ENCODE measurements at regions of chr18 and their contacts with region 1.

Region 1: DNA sequence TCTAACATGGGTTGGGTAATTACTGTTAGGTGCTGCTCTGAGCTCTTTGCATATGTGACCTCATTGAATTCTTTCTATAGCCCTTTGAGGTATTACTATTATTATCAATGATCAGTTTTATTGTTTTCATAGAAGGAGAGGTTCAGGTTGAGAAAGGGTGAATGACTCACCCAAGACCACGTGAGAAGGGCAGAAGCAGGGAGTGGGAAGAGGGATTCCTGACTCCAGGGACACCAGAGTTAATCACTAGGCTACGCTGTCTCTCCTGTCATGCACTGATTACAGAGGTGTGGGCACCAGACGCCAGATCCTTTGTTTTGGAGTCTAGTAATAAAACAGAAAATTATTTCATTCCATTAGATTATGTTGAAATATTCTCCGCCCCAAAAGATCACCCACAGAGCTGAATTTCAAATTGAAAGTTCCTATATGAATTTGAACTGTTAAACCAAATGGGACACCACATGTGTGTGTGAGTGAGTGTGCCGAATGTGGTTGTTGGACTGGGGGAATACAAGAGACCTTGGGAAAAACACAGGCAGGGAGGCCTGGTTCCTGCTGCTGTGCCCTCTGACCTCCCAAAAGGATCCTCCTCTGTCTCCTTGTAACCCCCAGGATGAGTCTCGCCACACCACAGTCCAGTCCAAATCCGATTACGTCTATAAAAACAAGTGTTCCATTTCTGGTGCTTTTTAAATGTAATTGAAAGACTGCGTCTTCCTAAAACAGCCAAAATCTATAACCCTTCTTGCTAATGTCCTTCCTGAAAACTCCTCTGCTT is 215.4 kb downstream of the ZNF521 start:
- DNase-seq: no peak
- ATAC-seq: no peak
- H3K4me3 ChIP-seq: no peak overlapping the region
- H3K4me3 Mint-ChIP-seq: no peak overlapping the region
- H3K27ac ChIP-seq: no peak overlapping the region
- H3K27ac Mint-ChIP-seq: no peak overlapping the region
- H3K4me1 ChIP-seq: no peaks in the 10 kb centered on the region
- H3K4me1 Mint-ChIP-seq: no peaks in the 10 kb centered on the region
- H3K27me3 ChIP-seq: no peaks in the 10 kb centered on the region
- H3K27me3 Mint-ChIP-seq: no peaks in the 10 kb centered on the region
- CTCF ChIP-seq: no peak

Region 2: GRCh38 chr18:25174324-25174723 is 37.7 kb after region 1 on chr18:
- CTCF ChIA-PET with region 1: no interaction called
- POLR2A ChIA-PET with region 1: no interaction called
- intact Hi-C with region 1: loop called in 1 of 2 experiments (anchors 1 kb)
- DNase-seq: no peak
- ATAC-seq: no peak
- H3K4me3 ChIP-seq: no peak overlapping the region
- H3K4me3 Mint-ChIP-seq: no peak overlapping the region
- H3K27ac ChIP-seq: no peak overlapping the region
- H3K27ac Mint-ChIP-seq: no peak overlapping the region
- H3K4me1 ChIP-seq: no peaks in the 10 kb centered on the region
- H3K4me1 Mint-ChIP-seq: no peaks in the 10 kb centered on the region
- H3K27me3 ChIP-seq: no peaks in the 10 kb centered on the region
- H3K27me3 Mint-ChIP-seq: peaks cover 3% of the 10 kb centered on the region
- CTCF ChIP-seq: no peak

Measured in CD8-positive, alpha-beta T cell (primary cell).